WTC11 (cell line): ENCODE measurements at regions of chr10 and their contacts with region 1.

Region 1: DNA sequence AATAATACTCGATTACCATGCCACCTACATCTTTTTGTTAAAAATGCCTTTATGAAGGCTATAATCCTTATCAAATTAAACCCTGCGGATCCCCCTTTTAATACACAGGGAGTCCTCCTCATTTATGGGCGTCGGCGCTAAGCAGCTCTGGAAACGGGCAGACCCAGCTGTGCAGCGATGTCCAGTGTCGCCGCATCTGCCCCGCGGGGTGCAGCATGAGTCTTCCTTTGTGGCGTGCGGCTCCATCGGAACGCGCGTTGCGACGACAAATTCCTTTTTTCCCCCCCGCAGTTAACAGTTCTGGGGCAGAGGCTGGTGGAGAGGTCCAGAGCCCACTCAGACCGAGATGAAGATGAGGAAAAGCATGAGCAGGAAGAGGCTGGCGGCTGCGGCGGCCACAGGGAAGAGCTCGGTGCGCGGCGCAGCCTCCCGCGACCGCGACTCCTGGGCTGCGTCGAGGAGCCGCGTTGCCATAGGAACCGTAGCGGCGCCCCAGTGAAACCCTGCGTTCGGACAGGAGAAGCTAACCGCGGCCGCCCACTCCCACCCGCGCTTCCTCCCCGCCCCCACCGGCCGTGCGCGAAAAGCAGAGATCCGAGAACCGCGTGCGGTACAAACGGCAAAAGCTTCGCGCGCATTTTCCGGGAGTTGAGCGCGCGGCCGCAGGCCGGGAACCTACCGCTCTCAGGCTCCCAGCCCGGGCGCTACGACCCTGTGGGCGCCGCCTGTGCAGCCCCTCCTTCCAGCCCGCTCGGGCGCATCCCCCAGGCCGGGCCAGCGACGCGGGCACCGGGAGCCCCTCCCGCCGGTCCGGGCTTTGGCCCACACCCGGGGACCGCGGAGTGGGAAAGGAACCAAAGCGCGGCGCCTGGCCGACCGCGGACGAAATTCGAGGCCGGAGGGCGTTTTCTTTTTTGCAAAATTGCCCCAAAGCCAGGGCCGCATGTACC is 130.6 kb downstream of the SPAG6 start:
- DNase-seq: peak; percentile 51
- ATAC-seq: peak; percentile 55
- H3K4me3 Mint-ChIP-seq: peak overlapping the region; percentile 82
- H3K27ac Mint-ChIP-seq: no peak overlapping the region
- H3K4me1 Mint-ChIP-seq: peaks cover 34% of the 10 kb centered on the region
- H3K27me3 Mint-ChIP-seq: peaks cover 96% of the 10 kb centered on the region
- CTCF ChIP-seq: no peak

Region 2: DNA sequence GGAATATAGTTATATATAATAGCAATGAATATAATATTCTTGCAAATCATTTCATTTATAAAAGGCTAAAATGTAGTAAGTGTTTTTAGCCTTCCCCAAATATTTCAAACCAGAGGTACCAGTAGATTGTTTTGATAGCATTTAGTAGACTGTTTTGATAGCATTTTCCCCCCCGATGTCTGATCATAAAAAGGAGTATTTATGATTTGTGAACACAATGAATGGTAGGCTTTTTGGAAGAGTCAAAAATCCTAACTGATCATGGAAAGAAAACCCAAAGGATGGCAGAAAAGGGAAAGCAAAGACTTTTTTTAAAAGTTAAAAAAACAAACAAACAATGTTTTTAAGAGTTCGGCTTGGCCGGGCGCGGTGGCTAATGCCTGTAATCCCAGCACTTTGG is 86.0 kb after region 1 on chr10:
- CTCF ChIA-PET with region 1: no interaction called
- POLR2A ChIA-PET with region 1: interaction called, 10 read pairs
- DNase-seq: no peak
- ATAC-seq: no peak
- H3K4me3 Mint-ChIP-seq: no peak overlapping the region
- H3K27ac Mint-ChIP-seq: no peak overlapping the region
- H3K4me1 Mint-ChIP-seq: peaks cover 42% of the 10 kb centered on the region
- H3K27me3 Mint-ChIP-seq: no peaks in the 10 kb centered on the region
- CTCF ChIP-seq: no peak